Breast epithelium (tissue), 4 donors: ENCODE measurements at regions of chr15 and their contacts with region 1.

Region 1: GRCh38 chr15:64809649-64810496 is 15.6 kb downstream of the PIF1 start:
- DNase-seq: peak; percentile 42 to 63
- H3K4me3 ChIP-seq: no peak overlapping the region
- H3K27ac ChIP-seq: no peak overlapping the region
- H3K4me1 ChIP-seq: no peaks in the 10 kb centered on the region
- H3K27me3 ChIP-seq: peaks cover 0 to 3% of the 10 kb centered on the region in 2 donors
- CTCF ChIP-seq: peak; percentile 67 to 82 (median 79)
- POLR2A ChIP-seq: no peak

Region 2: DNA sequence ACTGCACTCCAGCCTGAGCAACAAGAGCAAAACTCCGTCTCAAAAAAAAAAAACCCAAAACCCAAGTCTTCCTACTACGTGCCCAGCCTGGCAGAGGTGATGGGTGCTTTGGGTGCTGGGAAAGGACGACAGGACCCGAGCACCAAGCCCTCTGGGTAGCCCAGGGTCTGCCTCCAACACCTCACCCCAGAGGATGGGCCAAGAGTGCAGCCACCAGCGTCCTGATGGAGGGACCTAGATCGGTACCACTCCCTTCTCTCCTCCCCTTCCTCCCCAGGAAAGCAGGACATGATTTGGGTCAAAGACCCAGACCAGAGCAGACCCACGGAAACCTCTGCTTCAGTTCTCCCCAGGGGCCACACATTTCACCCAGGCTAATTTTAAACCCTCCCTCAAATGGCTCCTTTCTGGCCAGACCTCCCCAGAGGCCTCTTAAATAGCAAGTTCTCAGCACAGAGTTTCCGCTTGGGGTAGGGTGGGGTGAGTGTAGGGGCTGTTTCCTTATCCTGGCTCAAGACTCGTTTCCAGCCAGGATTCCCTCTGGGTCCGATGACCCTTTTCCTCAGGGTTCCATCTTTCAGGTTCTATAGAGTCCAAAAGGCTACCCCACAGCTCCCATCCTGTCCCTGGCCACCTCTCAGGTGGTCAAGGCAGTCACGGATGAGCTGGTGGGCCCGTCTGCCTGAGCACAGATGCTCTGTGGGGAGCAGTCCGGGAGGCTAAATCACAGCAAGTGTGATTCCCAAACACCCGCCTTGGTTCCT is 55.0 kb before region 1 on chr15:
- intact Hi-C with region 1: loop called (anchors 5 kb)
- DNase-seq: no peak
- H3K4me3 ChIP-seq: no peak overlapping the region
- H3K27ac ChIP-seq: peak overlapping the region in 1 of 2 donors; percentile 55
- H3K4me1 ChIP-seq: no peaks in the 10 kb centered on the region
- H3K27me3 ChIP-seq: no peaks in the 10 kb centered on the region
- CTCF ChIP-seq: no peak
- POLR2A ChIP-seq: no peak

Region 3: DNA sequence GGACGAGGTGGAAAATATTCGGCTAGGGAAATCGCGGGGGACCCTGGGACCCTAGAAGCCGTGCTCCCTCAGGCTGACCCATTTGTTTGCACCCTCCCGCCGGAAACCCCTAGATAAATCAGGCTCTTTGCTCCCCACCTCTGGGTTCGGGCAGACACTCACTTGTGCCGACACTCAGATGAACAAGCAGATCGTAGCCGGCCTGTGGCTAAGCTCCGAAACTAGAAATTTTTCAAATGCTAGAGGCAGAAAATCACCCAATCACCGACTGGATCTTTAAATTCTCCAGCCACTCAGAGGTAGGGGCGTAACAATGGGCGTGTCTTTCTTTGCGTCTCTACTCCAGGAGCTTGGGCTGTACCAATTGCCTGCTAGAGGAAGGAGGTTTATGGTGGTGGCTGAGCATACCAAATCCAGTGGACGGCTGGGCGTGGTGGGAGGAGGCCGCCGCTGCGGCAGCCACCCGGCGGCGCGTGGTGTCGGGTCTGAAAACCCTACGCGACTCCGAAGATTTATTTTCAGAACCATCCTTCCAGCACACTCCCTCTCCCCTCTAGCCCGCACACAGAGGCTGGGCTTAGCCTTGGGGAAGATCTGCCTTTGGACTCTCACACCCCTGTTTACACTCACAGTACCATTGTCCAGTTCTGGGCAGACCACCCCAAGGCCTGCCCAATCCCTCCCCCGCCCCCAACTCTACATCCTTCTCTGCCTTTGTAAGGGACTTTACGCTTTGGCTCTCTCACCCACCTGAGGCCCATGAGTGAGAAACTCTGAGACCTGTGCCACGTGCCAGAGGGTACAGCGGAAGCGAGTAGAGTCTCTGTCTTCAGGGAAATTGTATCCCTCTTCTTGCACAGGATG is 15.8 kb after region 1 on chr15 and contains the start of gene PIF1:
- intact Hi-C with region 1: loop called (anchors 1 kb)
- DNase-seq: peak; percentile 81 to 92
- H3K4me3 ChIP-seq: peak within 1 kb of the TSS; percentile 31 to 68 (median 56)
- H3K27ac ChIP-seq: peak within 1 kb of the TSS; percentile 36 to 78
- H3K4me1 ChIP-seq: peaks cover 7 to 12% of the 10 kb centered on the region in 2 donors
- H3K27me3 ChIP-seq: no peaks in the 10 kb centered on the region
- CTCF ChIP-seq: no peak
- POLR2A ChIP-seq: peak; percentile 21
- total RNA-seq, gene PIF1: 0.44 to 1.3 (median 0.66) TPM